Caco-2 (cell line): ENCODE measurements at regions of chr1 and their contacts with region 1.

Region 1: DNA sequence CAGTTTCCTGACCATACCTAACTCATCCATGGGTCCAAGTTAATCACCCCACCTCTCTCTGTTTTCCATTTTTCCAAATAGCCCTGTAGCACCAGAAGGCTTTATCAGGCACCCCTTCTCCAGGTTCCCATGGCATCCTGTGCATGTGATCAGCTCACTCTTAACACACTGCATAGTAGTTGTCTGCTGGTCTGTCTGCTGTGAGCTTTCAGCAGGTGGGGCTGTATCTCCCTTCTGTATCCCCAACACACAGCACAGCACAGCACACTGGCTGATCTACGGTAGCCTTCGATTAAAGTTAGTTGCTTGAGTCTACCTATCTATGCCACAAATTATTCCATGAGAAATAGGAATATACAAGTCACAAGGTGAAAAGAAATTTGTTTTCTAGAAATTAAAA is 54.3 kb upstream of the C1orf198 start:
- DNase-seq: peak in 1 of 2 experiments; percentile 27
- H3K4me3 ChIP-seq: no peak overlapping the region
- H3K4me3 Mint-ChIP-seq: no peak overlapping the region
- H3K27ac Mint-ChIP-seq: peak overlapping the region; percentile 40
- H3K4me1 ChIP-seq: peaks cover 20% of the 10 kb centered on the region
- H3K4me1 Mint-ChIP-seq: peaks cover 22% of the 10 kb centered on the region
- H3K27me3 ChIP-seq: no peaks in the 10 kb centered on the region
- H3K27me3 Mint-ChIP-seq: no peaks in the 10 kb centered on the region
- CTCF ChIP-seq: peak in 1 of 2 experiments; percentile 44

Region 2: DNA sequence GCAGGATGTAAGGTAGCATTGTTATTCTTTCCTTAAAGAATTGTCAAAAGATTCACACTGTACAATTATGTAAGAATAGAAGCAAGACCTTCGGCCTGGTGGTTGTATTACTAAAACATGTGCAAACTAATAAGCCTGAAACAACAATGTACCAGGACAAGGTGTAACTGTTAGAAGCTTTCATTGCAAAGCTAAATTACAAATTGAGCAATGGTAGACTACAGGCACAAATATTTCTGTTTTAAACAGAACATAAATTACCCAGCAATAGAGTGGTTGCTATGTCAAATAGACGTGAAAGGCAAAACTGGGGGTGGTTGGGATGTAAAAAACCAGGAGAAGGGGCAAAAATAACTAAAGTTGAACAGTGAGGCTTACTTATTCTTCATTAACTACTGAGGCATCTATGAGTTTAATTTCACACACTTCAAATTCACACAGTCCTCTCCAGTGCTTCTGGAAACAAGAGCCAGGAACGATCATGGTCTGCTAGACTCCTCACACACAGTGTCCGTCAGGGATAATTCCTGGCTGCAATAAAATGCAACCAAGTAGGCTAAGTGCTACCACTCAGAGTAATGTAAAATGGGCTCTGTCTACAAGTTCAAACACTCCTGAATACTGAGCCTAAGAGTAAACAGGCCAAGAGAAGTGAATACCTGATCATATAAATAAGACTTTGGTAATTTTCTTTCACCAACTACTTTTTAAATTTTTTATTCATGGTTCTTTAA is 15.0 kb before region 1 on chr1:
- CTCF ChIA-PET with region 1: no interaction called
- POLR2A ChIA-PET with region 1: no interaction called
- intact Hi-C with region 1: no loop called
- DNase-seq: no peak
- H3K4me3 ChIP-seq: no peak overlapping the region
- H3K4me3 Mint-ChIP-seq: no peak overlapping the region
- H3K27ac Mint-ChIP-seq: no peak overlapping the region
- H3K4me1 ChIP-seq: peaks cover 4% of the 10 kb centered on the region; the same call in 1 of the 2 replicates
- H3K4me1 Mint-ChIP-seq: no peaks in the 10 kb centered on the region
- H3K27me3 ChIP-seq: no peaks in the 10 kb centered on the region
- H3K27me3 Mint-ChIP-seq: no peaks in the 10 kb centered on the region
- CTCF ChIP-seq: no peak

Region 3: GRCh38 chr1:231039161-231040018 is 116.8 kb after region 1 on chr1:
- CTCF ChIA-PET with region 1: no interaction called
- POLR2A ChIA-PET with region 1: no interaction called
- intact Hi-C with region 1: loop called (anchors 2 kb)
- DNase-seq: peak; percentile 51 to 64
- H3K4me3 ChIP-seq: peak overlapping the region; percentile 78
- H3K4me3 Mint-ChIP-seq: peak overlapping the region; percentile 81
- H3K27ac Mint-ChIP-seq: peak overlapping the region; percentile 55
- H3K4me1 ChIP-seq: peaks cover 26% of the 10 kb centered on the region
- H3K4me1 Mint-ChIP-seq: peaks cover 35% of the 10 kb centered on the region
- H3K27me3 ChIP-seq: no peaks in the 10 kb centered on the region
- H3K27me3 Mint-ChIP-seq: no peaks in the 10 kb centered on the region
- CTCF ChIP-seq: no peak